Activated naive CD4-positive, alpha-beta T cell treated with anti-CD3 and anti-CD28 coated beads for 36 hours (primary cell): ENCODE measurements at regions of chr13 and their contacts with region 1.

Region 1: GRCh38 chr13:40613192-40613818 is 53.1 kb downstream of the FOXO1 start:
- DNase-seq: peak; percentile 73
- H3K4me3 Mint-ChIP-seq: peak overlapping the region; percentile 71
- H3K27ac Mint-ChIP-seq: peak overlapping the region; percentile 95
- H3K4me1 Mint-ChIP-seq: peaks cover 93% of the 10 kb centered on the region
- H3K27me3 Mint-ChIP-seq: no peaks in the 10 kb centered on the region

Region 2: DNA sequence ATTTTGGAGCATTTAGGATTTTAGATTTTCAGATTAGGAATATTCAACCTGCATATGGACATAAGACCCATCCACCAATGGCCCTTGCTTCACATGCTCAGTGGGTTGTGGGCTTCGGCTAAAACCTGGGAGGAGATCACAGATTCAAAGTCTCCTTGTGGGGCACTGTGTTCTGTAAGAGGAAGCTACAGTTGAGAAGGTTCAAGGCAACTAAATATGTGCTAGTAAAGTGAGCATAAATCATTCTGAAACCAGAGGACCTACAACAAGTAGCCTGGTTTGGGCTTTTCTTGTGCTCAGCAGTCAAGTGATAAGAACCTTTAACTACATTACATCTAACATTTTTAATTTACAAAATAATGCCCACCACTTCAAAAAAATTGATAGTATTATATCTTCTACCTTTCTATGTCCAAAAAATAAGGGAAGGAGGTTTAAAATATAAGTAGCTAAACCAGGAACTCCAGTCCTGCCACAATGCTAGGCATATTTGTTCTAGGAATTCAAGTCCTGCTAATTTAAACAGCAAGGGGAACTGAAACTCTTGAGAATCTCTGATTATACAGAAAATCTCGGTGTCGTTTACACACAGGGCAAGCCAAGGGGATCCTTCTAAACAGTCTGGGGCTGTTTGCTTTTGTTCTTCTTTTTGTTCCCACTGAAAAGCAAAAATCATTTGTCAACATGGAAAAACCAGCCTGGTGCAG is 16.5 kb after region 1 on chr13:
- CTCF ChIA-PET with region 1: interaction called, 3 read pairs
- intact Hi-C with region 1: loop called (anchors 1 kb)
- DNase-seq: no peak
- H3K4me3 Mint-ChIP-seq: no peak overlapping the region
- H3K27ac Mint-ChIP-seq: peak overlapping the region; percentile 73
- H3K4me1 Mint-ChIP-seq: peaks cover 84% of the 10 kb centered on the region
- H3K27me3 Mint-ChIP-seq: no peaks in the 10 kb centered on the region

Region 3: GRCh38 chr13:40897058-40897457 is 283.8 kb after region 1 on chr13:
- CTCF ChIA-PET with region 1: no interaction called
- intact Hi-C with region 1: no loop called
- DNase-seq: no peak
- H3K4me3 Mint-ChIP-seq: no peak overlapping the region
- H3K27ac Mint-ChIP-seq: no peak overlapping the region
- H3K4me1 Mint-ChIP-seq: peaks cover 2% of the 10 kb centered on the region
- H3K27me3 Mint-ChIP-seq: no peaks in the 10 kb centered on the region